Endothelial cell of umbilical vein (primary cell): ENCODE measurements at regions of chr3 and their contacts with region 1.

Region 1: GRCh38 chr3:98329392-98330124 is 24.1 kb upstream of the OR5K4 start:
- DNase-seq: peak; percentile 46
- H3K4me3 ChIP-seq: no peak overlapping the region
- H3K27ac ChIP-seq: no peak overlapping the region
- H3K4me1 ChIP-seq: no peaks in the 10 kb centered on the region
- H3K27me3 ChIP-seq: peaks cover 5 to 8% of the 10 kb centered on the region in 2 experiments
- CTCF ChIP-seq: peak; percentile 60 to 71
- POLR2A ChIP-seq: no peak

Region 2: DNA sequence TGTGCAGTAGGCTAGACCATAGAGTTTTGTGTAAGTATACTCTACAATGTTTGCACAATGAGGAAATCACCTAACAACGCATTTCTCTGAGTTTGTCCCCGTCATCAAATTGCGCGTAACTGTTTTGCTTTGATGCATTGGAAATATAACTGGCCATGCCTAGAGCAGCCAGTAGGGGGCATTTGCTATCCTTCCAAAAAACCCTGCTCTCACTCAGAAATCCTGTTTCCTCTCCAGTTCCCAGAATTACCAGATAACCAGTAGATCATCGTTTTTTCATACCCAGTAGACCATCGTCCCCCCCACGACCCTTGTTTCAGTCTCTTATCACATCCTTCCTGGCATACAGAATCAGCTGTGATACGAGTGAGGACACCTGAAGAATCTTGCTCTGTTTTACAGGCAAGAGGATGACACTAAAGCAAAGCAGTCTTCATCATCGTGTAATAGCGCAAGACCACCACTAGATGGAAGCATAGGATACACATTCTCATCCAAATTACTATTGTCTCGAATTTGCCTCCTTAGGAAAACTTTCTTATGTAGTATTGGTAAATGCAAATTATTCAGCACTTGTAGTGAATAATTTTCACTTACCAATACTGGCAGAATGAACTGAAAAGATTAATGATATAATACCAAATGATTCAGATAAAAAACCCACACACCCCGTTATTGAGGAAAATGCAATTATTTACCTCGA is 290.1 kb before region 1 on chr3:
- CTCF ChIA-PET with region 1: interaction called, 72 read pairs
- POLR2A ChIA-PET with region 1: no interaction called
- dilution Hi-C with region 1: no loop called
- intact Hi-C with region 1: loop called (anchors 1 kb)
- DNase-seq: peak; percentile 87
- H3K4me3 ChIP-seq: peak overlapping the region in 2 of 3 experiments; percentile 19 to 56
- H3K27ac ChIP-seq: no peak overlapping the region
- H3K4me1 ChIP-seq: no peaks in the 10 kb centered on the region
- H3K27me3 ChIP-seq: peaks cover 9 to 14% of the 10 kb centered on the region in 2 experiments
- CTCF ChIP-seq: peak; percentile 76 to 84
- POLR2A ChIP-seq: no peak